ENCODE measurements at regions of chr4 and their contacts with region 1.

Region 1: DNA sequence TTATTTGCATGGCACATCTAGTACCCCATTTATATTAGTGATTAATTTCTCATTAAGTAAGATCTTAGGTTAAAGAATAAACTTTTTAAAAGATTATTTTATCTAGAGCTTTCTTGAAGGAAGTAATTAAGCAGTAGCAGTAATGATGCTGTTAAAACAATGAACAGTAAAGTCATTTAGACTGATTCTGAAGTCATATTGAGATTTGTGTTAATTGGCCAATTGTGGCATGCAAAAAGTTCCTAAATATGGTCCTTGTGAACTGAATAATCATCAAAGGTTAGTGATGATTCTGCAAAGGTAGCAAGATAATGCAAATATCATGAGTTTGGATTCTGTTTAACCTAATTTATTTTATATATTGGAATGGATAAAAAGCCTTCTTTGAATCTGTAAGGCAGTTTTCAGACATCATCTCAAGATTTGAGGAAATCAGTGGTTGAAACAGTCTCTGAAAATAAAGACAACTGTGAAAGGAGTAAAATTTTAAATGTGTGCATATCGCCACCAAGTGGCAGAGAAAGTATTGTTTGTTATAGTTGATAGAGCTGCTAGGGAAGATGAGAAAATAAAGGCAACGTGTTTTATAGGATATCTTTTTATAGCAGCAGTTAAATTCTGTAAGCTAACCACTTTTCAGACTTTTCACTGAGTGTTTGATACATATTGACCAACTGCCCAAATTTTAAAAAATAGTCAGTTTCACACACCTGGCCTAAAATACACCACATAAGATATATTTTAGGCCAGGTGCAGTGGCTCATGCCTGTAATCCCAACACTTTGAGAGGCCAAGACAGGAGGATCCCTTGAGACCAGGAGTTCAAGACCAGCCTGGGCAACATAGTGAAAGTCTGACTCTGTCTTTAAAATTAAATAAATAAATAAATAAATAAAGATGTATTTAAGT is 79.6 kb downstream of the CCKAR start:
- DNase-seq: peak in 5 of 9 experiments; percentile 4 to 69 (median 31)
- ATAC-seq: no peak
- H3K4me3 ChIP-seq: no peak overlapping the region
- H3K4me3 Mint-ChIP-seq: no peak overlapping the region
- H3K27ac ChIP-seq: no peak overlapping the region
- H3K27ac Mint-ChIP-seq: no peak overlapping the region
- H3K4me1 ChIP-seq: no peaks in the 10 kb centered on the region
- H3K4me1 Mint-ChIP-seq: no peaks in the 10 kb centered on the region
- H3K27me3 ChIP-seq: no peaks in the 10 kb centered on the region
- H3K27me3 Mint-ChIP-seq: no peaks in the 10 kb centered on the region
- CTCF ChIP-seq: peak; percentile 76

Region 2: DNA sequence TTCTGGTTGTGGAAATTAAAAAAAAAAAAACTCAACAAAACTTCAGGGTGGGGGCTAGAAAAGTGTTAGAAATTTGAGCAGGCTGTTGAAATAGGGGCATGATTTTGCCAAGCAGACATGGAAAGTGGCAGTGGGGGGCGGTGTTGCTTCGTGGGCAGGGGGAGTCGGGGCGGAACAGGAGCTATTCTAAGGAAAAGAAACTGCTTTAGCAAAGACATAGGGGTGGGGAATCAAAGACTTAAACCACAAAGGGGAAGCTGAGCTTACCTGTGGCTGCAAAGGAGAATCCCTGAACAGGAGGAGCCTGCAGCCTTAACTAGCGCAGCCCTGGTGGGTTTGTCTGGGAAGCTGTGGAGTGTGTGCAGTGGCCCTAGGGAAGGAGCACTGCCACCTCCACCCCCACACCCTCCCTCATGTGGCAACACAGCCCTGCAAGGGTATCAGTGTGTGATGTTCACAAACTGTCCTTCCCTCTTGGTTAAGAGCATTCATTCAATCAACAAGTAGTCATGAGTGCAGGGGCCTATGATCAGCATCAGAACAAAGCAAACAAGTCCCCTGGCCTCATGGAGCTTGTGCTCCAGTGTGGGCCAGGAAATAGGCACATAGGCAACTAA is 568.3 kb before region 1 on chr4:
- CTCF ChIA-PET with region 1: interaction called, 4 read pairs
- POLR2A ChIA-PET with region 1: no interaction called
- intact Hi-C with region 1: loop called (anchors 1 to 2 kb)
- DNase-seq: peak in 8 of 9 experiments; percentile 29 to 68 (median 60)
- ATAC-seq: peak; percentile 83
- H3K4me3 ChIP-seq: no peak overlapping the region
- H3K4me3 Mint-ChIP-seq: no peak overlapping the region
- H3K27ac ChIP-seq: no peak overlapping the region
- H3K27ac Mint-ChIP-seq: no peak overlapping the region
- H3K4me1 ChIP-seq: peaks cover 20% of the 10 kb centered on the region
- H3K4me1 Mint-ChIP-seq: peaks cover 54% of the 10 kb centered on the region
- H3K27me3 ChIP-seq: no peaks in the 10 kb centered on the region
- H3K27me3 Mint-ChIP-seq: no peaks in the 10 kb centered on the region
- CTCF ChIP-seq: peak; percentile 24

Region 3: GRCh38 chr4:25986807-25987206 is 423.8 kb before region 1 on chr4:
- CTCF ChIA-PET with region 1: interaction called, 42 read pairs
- POLR2A ChIA-PET with region 1: no interaction called
- intact Hi-C with region 1: loop called (anchors 1 kb)
- DNase-seq: no peak
- ATAC-seq: no peak
- H3K4me3 ChIP-seq: no peak overlapping the region
- H3K4me3 Mint-ChIP-seq: no peak overlapping the region
- H3K27ac ChIP-seq: no peak overlapping the region
- H3K27ac Mint-ChIP-seq: no peak overlapping the region
- H3K4me1 ChIP-seq: no peaks in the 10 kb centered on the region
- H3K4me1 Mint-ChIP-seq: peaks cover 4% of the 10 kb centered on the region
- H3K27me3 ChIP-seq: peaks cover 0 to under 1% of the 10 kb centered on the region in 2 experiments
- H3K27me3 Mint-ChIP-seq: peaks cover 5% of the 10 kb centered on the region
- CTCF ChIP-seq: no peak

Region 4: GRCh38 chr4:26028793-26029567 is 381.7 kb before region 1 on chr4:
- CTCF ChIA-PET with region 1: interaction called, 3 read pairs
- POLR2A ChIA-PET with region 1: no interaction called
- intact Hi-C with region 1: loop called (anchors 1 to 2 kb)
- DNase-seq: peak; percentile 27 to 63 (median 46)
- ATAC-seq: peak; percentile 75
- H3K4me3 ChIP-seq: no peak overlapping the region
- H3K4me3 Mint-ChIP-seq: no peak overlapping the region
- H3K27ac ChIP-seq: no peak overlapping the region
- H3K27ac Mint-ChIP-seq: no peak overlapping the region
- H3K4me1 ChIP-seq: no peaks in the 10 kb centered on the region
- H3K4me1 Mint-ChIP-seq: peaks cover 2% of the 10 kb centered on the region
- H3K27me3 ChIP-seq: peaks cover 0 to 2% of the 10 kb centered on the region in 2 experiments
- H3K27me3 Mint-ChIP-seq: peaks cover 19% of the 10 kb centered on the region
- CTCF ChIP-seq: peak; percentile 29

Region 5: DNA sequence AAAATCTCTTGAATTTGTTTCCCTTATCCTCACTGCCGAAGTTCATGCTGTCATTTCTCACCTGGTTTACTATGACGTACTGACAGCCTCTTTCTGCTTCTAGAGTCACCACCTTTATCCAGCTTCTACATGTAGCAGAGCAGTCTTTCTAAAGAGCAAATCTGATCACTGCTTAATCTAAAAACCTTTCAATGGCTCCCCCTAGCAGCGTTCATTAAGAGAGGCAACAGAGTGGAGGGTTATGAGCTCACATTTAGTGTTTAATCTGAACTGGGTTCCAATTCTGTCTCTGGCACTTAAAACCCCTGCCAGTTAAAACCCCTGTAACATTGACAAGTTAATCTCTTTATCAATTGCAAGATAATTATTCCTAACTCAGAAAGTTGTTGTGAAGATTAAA is 85.4 kb before region 1 on chr4:
- CTCF ChIA-PET with region 1: interaction called, 107 read pairs
- POLR2A ChIA-PET with region 1: no interaction called
- intact Hi-C with region 1: loop called (anchors 1 kb)
- DNase-seq: peak in 5 of 9 experiments; percentile 7 to 71 (median 22)
- ATAC-seq: peak; percentile 35
- H3K4me3 ChIP-seq: no peak overlapping the region
- H3K4me3 Mint-ChIP-seq: no peak overlapping the region
- H3K27ac ChIP-seq: no peak overlapping the region
- H3K27ac Mint-ChIP-seq: no peak overlapping the region
- H3K4me1 ChIP-seq: peaks cover 14% of the 10 kb centered on the region
- H3K4me1 Mint-ChIP-seq: peaks cover 52% of the 10 kb centered on the region
- H3K27me3 ChIP-seq: no peaks in the 10 kb centered on the region
- H3K27me3 Mint-ChIP-seq: no peaks in the 10 kb centered on the region
- CTCF ChIP-seq: peak; percentile 53